ENCODE measurements at regions of chrX and their contacts with region 1.

Region 1: GRCh38 chrX:51476930-51477329 is 19.5 kb downstream of the NUDT11 start:
- DNase-seq: no peak
- ATAC-seq: no peak
- H3K4me3 ChIP-seq: no peak overlapping the region
- H3K27ac ChIP-seq: no peak overlapping the region
- H3K4me1 ChIP-seq: no peaks in the 10 kb centered on the region
- CTCF ChIP-seq: no peak
- EP300 ChIP-seq: no peak
- POLR2A ChIP-seq: no peak
- RAD21 ChIP-seq: no peak

Region 2: DNA sequence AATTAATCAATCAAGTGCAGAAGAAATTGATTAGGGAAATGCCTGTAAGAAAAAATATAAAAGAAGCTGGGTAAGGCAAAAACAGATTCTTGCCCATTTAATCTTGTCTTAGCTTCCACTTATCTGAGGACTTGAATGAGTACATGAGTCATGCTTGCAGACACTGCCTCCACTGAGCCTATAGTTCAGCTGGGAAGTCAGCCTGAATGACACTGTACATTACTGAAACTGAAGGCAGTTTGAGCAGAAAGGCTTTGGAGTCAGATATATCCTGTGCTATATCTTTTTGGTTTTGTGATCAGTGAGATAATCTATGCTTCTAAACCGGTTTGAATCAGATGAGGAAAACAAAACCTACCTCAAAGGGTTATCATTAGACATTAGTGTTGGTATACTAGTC is 41.8 kb before region 1 on chrX:
- CTCF ChIA-PET with region 1: no interaction called
- POLR2A ChIA-PET with region 1: no interaction called
- DNase-seq: no peak
- ATAC-seq: no peak
- H3K4me3 ChIP-seq: no peak overlapping the region
- H3K27ac ChIP-seq: no peak overlapping the region
- H3K4me1 ChIP-seq: no peaks in the 10 kb centered on the region
- CTCF ChIP-seq: no peak
- EP300 ChIP-seq: no peak
- POLR2A ChIP-seq: no peak
- RAD21 ChIP-seq: no peak

Region 3: GRCh38 chrX:51461053-51462044 is 15.6 kb before region 1 on chrX:
- CTCF ChIA-PET with region 1: interaction called, 18 read pairs
- POLR2A ChIA-PET with region 1: no interaction called
- DNase-seq: peak; percentile 12 to 53
- ATAC-seq: peak in 1 of 2 experiments; percentile 66; a peak in 2 of 6 replicates
- H3K4me3 ChIP-seq: no peak overlapping the region
- H3K27ac ChIP-seq: no peak overlapping the region
- H3K4me1 ChIP-seq: no peaks in the 10 kb centered on the region
- CTCF ChIP-seq: peak; percentile 38
- EP300 ChIP-seq: no peak
- POLR2A ChIP-seq: no peak
- RAD21 ChIP-seq: peak in 1 of 2 experiments; percentile 30; a peak in 3 of 5 replicates

Region 4: GRCh38 chrX:51496501-51497291 is 19.8 kb after region 1 on chrX and contains the start of gene NUDT11:
- CTCF ChIA-PET with region 1: no interaction called
- POLR2A ChIA-PET with region 1: no interaction called
- DNase-seq: peak; percentile 30 to 58
- ATAC-seq: peak; percentile 97 to 99
- H3K4me3 ChIP-seq: peak within 1 kb of the TSS; percentile 70
- H3K27ac ChIP-seq: peak within 1 kb of the TSS; percentile 67 to 91
- H3K4me1 ChIP-seq: no peaks in the 10 kb centered on the region
- CTCF ChIP-seq: no peak
- EP300 ChIP-seq: no peak
- POLR2A ChIP-seq: no peak
- RAD21 ChIP-seq: no peak
- polyA plus RNA-seq, gene NUDT11: 3.0 and 3.3 TPM in 2 replicates